Panc1 (cell line): ENCODE measurements at regions of chr7 and their contacts with region 1.

Region 1: DNA sequence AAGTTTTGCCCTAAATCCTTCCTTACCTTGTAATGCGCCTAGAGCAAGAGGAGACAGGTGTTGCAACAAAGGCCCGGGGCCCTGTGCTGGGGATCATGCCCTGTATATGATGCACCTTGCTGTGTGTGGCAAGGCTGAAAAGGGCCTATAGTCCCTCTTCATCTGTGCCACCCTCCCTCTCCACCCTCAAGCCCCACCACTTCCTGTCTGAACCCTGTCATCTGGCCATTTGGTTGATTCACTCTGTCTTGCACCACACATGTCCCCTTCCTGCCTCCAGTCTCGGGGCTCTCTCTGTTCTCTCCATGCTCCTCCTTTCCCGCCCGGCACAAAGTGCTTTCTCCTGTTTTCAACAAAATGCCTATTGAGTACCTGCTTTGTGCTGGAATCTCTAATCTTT is 11.5 kb upstream of the MALSU1 start:
- DNase-seq: no peak
- ATAC-seq: no peak
- H3K4me3 ChIP-seq: no peak overlapping the region
- H3K27ac ChIP-seq: no peak overlapping the region
- H3K4me1 ChIP-seq: no peaks in the 10 kb centered on the region
- H3K27me3 ChIP-seq: no peaks in the 10 kb centered on the region
- CTCF ChIP-seq: no peak

Region 2: DNA sequence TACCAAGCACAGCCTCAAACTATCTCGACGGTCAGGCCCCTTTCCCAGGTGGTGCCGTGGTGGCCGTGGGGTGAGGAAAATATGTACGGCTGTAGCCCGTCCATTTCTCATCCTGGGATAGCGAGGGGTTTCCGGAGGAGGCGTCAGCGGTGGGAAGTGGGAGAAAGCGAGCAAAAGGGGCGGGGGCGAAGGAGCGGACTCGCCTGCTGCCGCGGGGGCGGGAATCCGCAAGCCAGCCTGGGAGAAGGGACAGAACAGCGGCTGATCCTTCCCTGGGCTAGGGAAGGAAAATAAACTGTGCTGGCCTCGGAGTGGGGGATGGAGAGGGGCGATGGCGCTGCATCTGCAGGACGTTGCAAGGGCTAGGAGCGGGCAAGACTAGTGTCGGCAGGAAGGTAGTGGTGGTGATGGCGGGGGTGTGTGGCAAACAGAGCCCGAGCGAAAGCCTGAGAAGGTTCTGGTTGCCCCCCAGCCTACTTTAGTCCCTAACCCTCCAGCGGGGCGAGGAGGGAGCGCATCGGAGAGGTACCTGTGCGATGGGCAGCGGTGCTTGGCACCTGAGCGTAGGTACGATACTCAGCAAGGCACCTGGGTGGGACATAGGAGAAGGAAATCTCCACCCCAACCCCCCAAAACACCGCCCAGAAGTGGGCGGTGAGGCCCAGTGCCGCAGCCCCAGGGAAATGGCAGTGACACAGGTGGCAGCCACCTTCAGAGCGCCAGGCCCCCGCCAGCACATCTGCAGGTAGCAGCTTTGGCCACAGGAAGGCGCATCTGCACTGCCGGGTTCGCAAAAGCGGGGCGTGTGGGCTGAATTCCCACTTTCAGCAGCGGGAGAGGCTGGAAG is 737.7 kb before region 1 on chr7:
- CTCF ChIA-PET with region 1: no interaction called
- POLR2A ChIA-PET with region 1: no interaction called
- in situ Hi-C with region 1: no loop called
- intact Hi-C with region 1: no loop called
- DNase-seq: no peak
- ATAC-seq: peak; percentile 78
- H3K4me3 ChIP-seq: peak overlapping the region in 1 of 2 experiments; percentile 14; a peak in 2 of 4 replicates
- H3K27ac ChIP-seq: no peak overlapping the region
- H3K4me1 ChIP-seq: no peaks in the 10 kb centered on the region; the same call in 1 of the 2 replicates
- H3K27me3 ChIP-seq: peaks cover 46% of the 10 kb centered on the region
- CTCF ChIP-seq: peak; percentile 82

Region 3: GRCh38 chr7:23242321-23242720 is 45.3 kb before region 1 on chr7:
- CTCF ChIA-PET with region 1: no interaction called
- POLR2A ChIA-PET with region 1: no interaction called
- in situ Hi-C with region 1: no loop called
- intact Hi-C with region 1: no loop called
- DNase-seq: no peak
- ATAC-seq: no peak
- H3K4me3 ChIP-seq: no peak overlapping the region
- H3K27ac ChIP-seq: no peak overlapping the region
- H3K4me1 ChIP-seq: peaks cover 5% of the 10 kb centered on the region; the same call in 1 of the 2 replicates
- H3K27me3 ChIP-seq: 0 out of 2 replicates have a peak, but pooled peaks cover 2% of the 10 kb centered on the region
- CTCF ChIP-seq: no peak

Region 4: GRCh38 chr7:23261843-23262452 is 25.7 kb before region 1 on chr7:
- CTCF ChIA-PET with region 1: interaction called, 10 read pairs
- POLR2A ChIA-PET with region 1: no interaction called
- in situ Hi-C with region 1: no loop called
- intact Hi-C with region 1: no loop called
- DNase-seq: peak; percentile 36
- ATAC-seq: peak; percentile 96
- H3K4me3 ChIP-seq: no peak overlapping the region
- H3K27ac ChIP-seq: no peak overlapping the region
- H3K4me1 ChIP-seq: no peaks in the 10 kb centered on the region
- H3K27me3 ChIP-seq: no peaks in the 10 kb centered on the region
- CTCF ChIP-seq: peak; percentile 99

Region 5: GRCh38 chr7:23315366-23315765 is 27.8 kb after region 1 on chr7:
- CTCF ChIA-PET with region 1: no interaction called
- POLR2A ChIA-PET with region 1: interaction called, 21 read pairs
- in situ Hi-C with region 1: no loop called
- intact Hi-C with region 1: no loop called
- DNase-seq: no peak
- ATAC-seq: peak; percentile 54
- H3K4me3 ChIP-seq: no peak overlapping the region
- H3K27ac ChIP-seq: no peak overlapping the region
- H3K4me1 ChIP-seq: peaks cover 7% of the 10 kb centered on the region
- H3K27me3 ChIP-seq: no peaks in the 10 kb centered on the region
- CTCF ChIP-seq: no peak

Region 6: GRCh38 chr7:23410446-23411183 is 123.0 kb after region 1 on chr7:
- CTCF ChIA-PET with region 1: no interaction called
- POLR2A ChIA-PET with region 1: no interaction called
- in situ Hi-C with region 1: no loop called
- intact Hi-C with region 1: no loop called
- DNase-seq: no peak
- ATAC-seq: no peak
- H3K4me3 ChIP-seq: no peak overlapping the region
- H3K27ac ChIP-seq: no peak overlapping the region
- H3K4me1 ChIP-seq: no peaks in the 10 kb centered on the region
- H3K27me3 ChIP-seq: no peaks in the 10 kb centered on the region
- CTCF ChIP-seq: no peak